Transverse colon (tissue), 4 donors: ENCODE measurements at regions of chr1 and their contacts with region 1.

Region 1: GRCh38 chr1:86825319-86825718 is 88.6 kb downstream of the SELENOF start:
- DNase-seq: no peak
- H3K4me3 ChIP-seq: no peak overlapping the region
- H3K27ac ChIP-seq: no peak overlapping the region
- H3K4me1 ChIP-seq: no peaks in the 10 kb centered on the region
- H3K27me3 ChIP-seq: no peaks in the 10 kb centered on the region
- CTCF ChIP-seq: no peak
- EP300 ChIP-seq: no peak
- POLR2A ChIP-seq: no peak

Region 2: GRCh38 chr1:87084244-87084836 is 259.0 kb after region 1 on chr1:
- in situ Hi-C with region 1: loop called in 3 of 4 experiments (anchors 10 to 25 kb)
- intact Hi-C with region 1: loop called (anchors 5 kb)
- DNase-seq: no peak
- H3K4me3 ChIP-seq: no peak overlapping the region
- H3K27ac ChIP-seq: no peak overlapping the region
- H3K4me1 ChIP-seq: no peaks in the 10 kb centered on the region
- H3K27me3 ChIP-seq: no peaks in the 10 kb centered on the region
- CTCF ChIP-seq: peak; percentile 40 to 70 (median 57)
- EP300 ChIP-seq: no peak
- POLR2A ChIP-seq: no peak